ENCODE measurements at regions of chr22 and their contacts with region 1.

Region 1: GRCh38 chr22:34111210-34111824 is 191.0 kb upstream of the LARGE1 start:
- DNase-seq: peak; percentile 36
- CTCF ChIP-seq: peak; percentile 86

Region 2: DNA sequence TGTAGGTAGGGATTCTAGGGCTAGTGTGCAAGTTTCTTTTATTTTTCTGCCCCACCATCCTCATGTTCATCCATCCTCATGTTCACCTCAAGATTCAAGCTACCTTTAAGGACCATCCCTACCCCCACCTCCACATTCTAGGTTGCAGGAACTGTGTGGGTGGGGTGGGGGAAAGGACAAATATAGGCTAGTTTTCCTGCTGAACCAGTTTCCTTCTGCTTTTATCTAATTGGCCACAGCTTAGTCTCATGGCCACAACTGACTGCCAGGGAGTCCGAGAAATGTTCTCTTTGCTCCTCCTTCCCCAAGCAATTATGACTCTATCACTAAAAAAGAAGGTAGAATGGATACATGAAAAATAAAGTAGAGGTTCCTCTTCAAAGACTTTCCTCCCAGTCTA is 12.0 kb before region 1 on chr22:
- CTCF ChIA-PET with region 1: interaction called, 15 read pairs
- POLR2A ChIA-PET with region 1: no interaction called
- DNase-seq: no peak
- CTCF ChIP-seq: no peak

Region 3: GRCh38 chr22:34198976-34199375 is 87.7 kb after region 1 on chr22:
- CTCF ChIA-PET with region 1: no interaction called
- POLR2A ChIA-PET with region 1: no interaction called
- DNase-seq: no peak
- CTCF ChIP-seq: no peak

Measured in GM10248 (cell line).